Endothelial cell of umbilical vein (primary cell): ENCODE measurements at regions of chr7 and their contacts with region 1.

Region 1: DNA sequence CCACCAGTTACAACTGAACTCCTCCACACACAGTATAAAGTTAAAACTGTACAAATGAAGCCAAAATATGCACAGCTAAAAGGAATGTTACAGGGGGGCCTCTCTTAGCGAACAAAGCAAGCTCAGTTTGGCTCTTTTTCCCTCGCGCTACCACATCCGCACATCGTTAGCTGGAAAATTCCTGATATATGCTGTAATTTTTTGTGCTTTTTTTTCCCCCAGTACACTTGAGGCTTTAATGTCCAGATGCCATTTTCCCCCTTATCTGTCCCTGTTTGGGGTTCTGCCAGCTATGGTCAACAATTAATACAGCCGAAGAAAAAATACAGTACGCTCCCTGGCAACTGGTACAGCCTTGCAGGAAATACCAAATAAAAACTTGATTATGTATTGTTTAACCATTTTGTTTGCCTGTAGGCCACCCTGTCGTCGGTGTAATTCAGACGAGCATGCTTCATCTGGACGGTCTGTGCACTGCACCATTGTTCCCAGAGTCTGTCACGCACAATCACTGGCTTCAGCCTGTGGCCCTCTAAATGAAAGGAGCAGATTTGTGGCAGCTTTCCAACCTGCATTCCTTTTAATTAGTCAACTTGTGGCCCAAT is 108.1 kb upstream of the FAM133B start:
- DNase-seq: peak; percentile 95
- H3K4me3 ChIP-seq: peak overlapping the region in 1 of 3 experiments; percentile 1
- H3K27ac ChIP-seq: peak overlapping the region; percentile 75
- H3K4me1 ChIP-seq: peaks cover 44% of the 10 kb centered on the region
- H3K27me3 ChIP-seq: no peaks in the 10 kb centered on the region
- CTCF ChIP-seq: no peak
- POLR2A ChIP-seq: peak; percentile 35

Region 2: DNA sequence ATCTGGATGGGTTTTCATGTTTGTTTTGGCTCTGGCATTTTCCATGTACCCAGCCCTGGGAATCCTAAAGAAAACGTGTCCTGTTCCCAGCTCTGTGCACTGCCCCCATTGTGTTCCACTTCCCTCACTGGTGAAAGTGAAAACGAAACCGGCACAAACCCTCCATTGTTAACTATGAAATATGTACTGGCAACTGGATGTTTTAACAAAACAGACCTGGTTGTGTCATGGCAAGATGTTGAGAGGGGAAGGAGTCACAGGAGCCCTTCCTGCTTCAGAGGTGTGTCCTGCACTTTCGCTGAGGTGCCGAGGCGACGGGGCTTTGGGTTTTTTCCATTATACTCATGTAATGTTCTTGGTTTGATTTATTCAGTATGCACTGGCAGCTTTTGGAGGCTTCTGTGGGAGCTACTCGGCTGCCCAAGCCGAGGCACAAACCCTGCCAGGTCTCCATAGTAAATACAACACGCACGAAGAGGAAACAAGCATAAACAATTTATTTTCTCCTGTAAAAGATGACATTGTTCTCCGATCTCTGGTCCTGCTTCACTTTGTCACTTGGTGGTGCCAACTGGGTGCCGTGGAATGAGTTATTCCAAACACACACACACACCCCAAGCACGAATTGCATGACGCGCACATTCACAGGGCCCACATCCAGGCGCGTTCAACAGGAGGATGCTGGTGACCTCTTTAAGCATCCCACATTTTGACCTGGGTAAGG is 19.8 kb after region 1 on chr7:
- CTCF ChIA-PET with region 1: interaction called, 10 read pairs
- POLR2A ChIA-PET with region 1: no interaction called
- dilution Hi-C with region 1: no loop called
- intact Hi-C with region 1: loop called (anchors 1 kb)
- DNase-seq: peak; percentile 97
- H3K4me3 ChIP-seq: peak overlapping the region; percentile 28 to 72 (median 36)
- H3K27ac ChIP-seq: peak overlapping the region; percentile 95
- H3K4me1 ChIP-seq: peaks cover 28% of the 10 kb centered on the region
- H3K27me3 ChIP-seq: no peaks in the 10 kb centered on the region
- CTCF ChIP-seq: no peak
- POLR2A ChIP-seq: peak; percentile 59

Region 3: DNA sequence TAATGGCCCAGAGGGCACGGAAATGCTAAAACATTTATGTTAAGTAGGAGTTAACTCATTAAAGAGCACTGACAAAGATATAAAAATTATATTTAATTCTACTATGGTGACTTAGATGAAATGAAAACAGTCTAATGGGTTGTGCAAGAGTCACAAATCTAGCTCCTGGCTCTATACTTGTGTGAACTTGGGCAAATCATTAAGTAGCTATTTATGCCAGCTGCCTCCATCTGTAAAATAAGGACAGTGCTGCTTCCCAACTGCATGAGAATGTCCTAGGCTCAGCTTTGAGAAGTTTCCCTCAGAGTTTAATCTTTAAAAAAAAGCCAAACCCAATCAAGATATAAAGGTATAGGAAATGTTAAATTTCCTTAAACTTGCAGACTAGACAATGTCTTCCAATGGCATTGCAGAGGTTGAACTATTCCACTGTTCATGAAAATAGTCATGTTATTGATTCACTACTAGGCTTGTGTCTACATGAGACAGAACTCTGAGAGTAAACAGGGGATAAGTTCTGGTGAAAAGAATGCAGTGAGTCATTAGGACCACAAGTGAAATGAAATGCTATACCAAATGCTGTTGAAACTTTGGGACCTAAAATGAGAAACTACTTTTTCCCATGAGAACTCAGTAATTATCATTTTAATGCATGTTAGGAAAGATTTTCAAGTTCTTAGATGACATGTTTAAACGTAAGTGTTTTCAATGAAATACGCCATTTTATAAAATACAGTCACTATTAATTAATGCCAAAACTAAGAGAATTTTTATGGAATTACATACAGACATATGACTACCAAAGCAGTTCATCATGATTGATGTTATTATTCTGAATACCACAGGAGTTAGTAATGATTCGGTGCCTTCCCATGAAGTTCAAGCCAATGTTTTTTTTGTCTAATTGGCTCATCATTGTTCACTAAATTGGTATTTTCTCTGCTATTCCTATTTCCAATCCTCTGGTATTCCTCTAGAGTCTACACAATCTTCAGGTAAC is 53.9 kb after region 1 on chr7:
- CTCF ChIA-PET with region 1: no interaction called
- POLR2A ChIA-PET with region 1: no interaction called
- dilution Hi-C with region 1: no loop called
- intact Hi-C with region 1: no loop called
- DNase-seq: peak; percentile 77
- H3K4me3 ChIP-seq: no peak overlapping the region
- H3K27ac ChIP-seq: peak overlapping the region; percentile 59
- H3K4me1 ChIP-seq: peaks cover 21% of the 10 kb centered on the region
- H3K27me3 ChIP-seq: no peaks in the 10 kb centered on the region
- CTCF ChIP-seq: no peak
- POLR2A ChIP-seq: no peak